ENCODE measurements at regions of chr1 and their contacts with region 1.

Region 1: GRCh38 chr1:206106328-206107167 is 10.6 kb downstream of the AVPR1B start:
- DNase-seq: peak; percentile 65 to 72 (median 68)
- H3K4me3 ChIP-seq: no peak overlapping the region
- H3K4me3 Mint-ChIP-seq: no peak overlapping the region
- H3K27ac ChIP-seq: no peak overlapping the region
- H3K27ac Mint-ChIP-seq: peak overlapping the region in 2 of 7 donors; percentile 16 to 58
- H3K4me1 ChIP-seq: no peaks in the 10 kb centered on the region
- H3K4me1 Mint-ChIP-seq: peaks cover 3 to 9% (median 4%) of the 10 kb centered on the region in 4 donors
- H3K27me3 ChIP-seq: no peaks in the 10 kb centered on the region
- H3K27me3 Mint-ChIP-seq: peaks cover 2 to 6% of the 10 kb centered on the region in 2 donors

Region 2: DNA sequence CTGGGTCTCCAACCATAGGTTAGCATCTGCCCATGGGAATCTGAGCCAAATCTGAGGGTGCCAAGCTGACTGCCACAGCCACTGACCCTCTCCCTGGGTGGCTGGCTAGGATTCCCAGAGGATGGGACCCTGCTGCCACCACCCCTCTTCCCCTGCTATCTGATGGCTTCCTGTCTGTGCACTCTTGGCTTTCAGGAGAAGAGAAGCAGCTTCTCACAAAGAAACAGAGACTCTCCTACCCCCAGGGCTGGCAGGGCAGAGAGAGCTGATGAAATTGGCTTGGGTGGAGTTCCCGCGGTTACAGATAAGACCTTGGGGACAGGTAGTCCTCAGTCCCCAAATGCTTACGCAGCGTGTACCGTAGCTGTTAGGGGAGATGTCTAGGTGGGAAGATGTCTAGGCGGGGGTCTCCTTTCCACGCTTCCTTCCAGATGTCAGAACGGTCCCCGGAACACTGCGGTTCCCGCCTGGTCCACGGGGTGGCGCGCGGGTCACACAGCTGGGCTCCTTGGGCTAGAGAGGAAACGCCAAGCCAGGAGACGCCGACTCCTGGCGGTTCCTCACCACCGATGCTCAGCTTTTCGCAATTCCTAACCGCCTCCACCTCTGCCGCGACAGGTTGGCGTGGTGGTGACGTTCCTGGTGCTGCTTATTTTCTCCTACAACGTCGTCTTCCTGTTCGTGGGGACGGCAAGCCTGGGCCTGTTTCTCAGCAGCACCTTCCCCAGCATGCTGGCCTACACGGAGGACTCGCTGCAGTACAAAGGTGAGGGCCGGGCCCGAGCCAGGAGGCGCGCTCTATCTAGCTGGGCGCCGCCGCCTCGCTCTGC is 514.8 kb before region 1 on chr1:
- CTCF ChIA-PET with region 1: no interaction called
- POLR2A ChIA-PET with region 1: no interaction called
- intact Hi-C with region 1: loop called (anchors 2 kb)
- DNase-seq: peak; percentile 85 to 89 (median 86)
- H3K4me3 ChIP-seq: peak overlapping the region in 1 of 2 donors; percentile 61
- H3K4me3 Mint-ChIP-seq: peak overlapping the region; percentile 87 to 93 (median 90)
- H3K27ac ChIP-seq: peak overlapping the region; percentile 52
- H3K27ac Mint-ChIP-seq: peak overlapping the region; percentile 82 to 96 (median 89)
- H3K4me1 ChIP-seq: peaks cover 21% of the 10 kb centered on the region
- H3K4me1 Mint-ChIP-seq: peaks cover 17 to 34% (median 25%) of the 10 kb centered on the region in 4 donors
- H3K27me3 ChIP-seq: no peaks in the 10 kb centered on the region
- H3K27me3 Mint-ChIP-seq: no peaks in the 10 kb centered on the region

Region 3: DNA sequence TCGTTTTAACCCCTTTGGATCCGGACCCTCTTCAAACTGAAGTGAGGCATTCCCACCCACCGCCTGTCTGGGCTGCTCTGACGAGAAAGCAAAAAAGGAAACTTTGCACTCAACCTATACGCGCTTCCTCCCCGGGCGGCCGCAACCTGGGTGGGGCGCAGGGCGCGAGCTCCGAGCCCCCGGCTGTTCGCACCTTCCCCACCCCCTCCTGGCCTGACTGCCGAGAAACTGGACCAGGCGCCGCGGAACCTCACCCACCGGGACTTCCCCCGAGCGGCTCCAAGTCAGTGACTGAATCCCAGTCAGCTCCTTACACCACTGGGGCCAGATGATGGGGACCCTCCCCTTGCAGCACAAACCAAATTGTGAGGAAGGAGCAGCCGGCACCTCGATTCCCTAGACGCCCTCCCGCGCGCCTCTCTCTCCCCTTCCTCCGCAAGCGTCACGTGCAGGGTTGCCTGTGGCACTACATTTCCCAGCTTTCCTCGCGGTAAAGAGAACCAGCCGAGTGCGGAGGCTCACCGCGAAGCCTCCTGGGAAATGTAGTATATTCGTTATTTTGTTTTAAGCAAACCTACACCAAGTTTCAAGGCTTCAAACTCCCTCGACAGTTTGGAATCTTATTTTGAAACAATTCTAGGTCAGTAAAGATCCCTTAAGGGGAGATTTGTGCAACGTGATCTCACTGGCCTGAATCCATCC is 331.4 kb before region 1 on chr1 and contains the start of gene RAB29:
- CTCF ChIA-PET with region 1: no interaction called
- POLR2A ChIA-PET with region 1: no interaction called
- intact Hi-C with region 1: no loop called
- DNase-seq: peak; percentile 88 to 94 (median 90)
- H3K4me3 ChIP-seq: peak within 1 kb of the TSS; percentile 59 to 77
- H3K4me3 Mint-ChIP-seq: peak within 1 kb of the TSS; percentile 91 to 100 (median 92)
- H3K27ac ChIP-seq: peak within 1 kb of the TSS; percentile 87
- H3K27ac Mint-ChIP-seq: peak within 1 kb of the TSS; percentile 92 to 98 (median 97)
- H3K4me1 ChIP-seq: peaks cover 43% of the 10 kb centered on the region
- H3K4me1 Mint-ChIP-seq: peaks cover 35 to 69% (median 48%) of the 10 kb centered on the region in 4 donors
- H3K27me3 ChIP-seq: no peaks in the 10 kb centered on the region
- H3K27me3 Mint-ChIP-seq: no peaks in the 10 kb centered on the region
- total RNA-seq, gene RAB29: 59.7 to 62.0 TPM

Region 4: DNA sequence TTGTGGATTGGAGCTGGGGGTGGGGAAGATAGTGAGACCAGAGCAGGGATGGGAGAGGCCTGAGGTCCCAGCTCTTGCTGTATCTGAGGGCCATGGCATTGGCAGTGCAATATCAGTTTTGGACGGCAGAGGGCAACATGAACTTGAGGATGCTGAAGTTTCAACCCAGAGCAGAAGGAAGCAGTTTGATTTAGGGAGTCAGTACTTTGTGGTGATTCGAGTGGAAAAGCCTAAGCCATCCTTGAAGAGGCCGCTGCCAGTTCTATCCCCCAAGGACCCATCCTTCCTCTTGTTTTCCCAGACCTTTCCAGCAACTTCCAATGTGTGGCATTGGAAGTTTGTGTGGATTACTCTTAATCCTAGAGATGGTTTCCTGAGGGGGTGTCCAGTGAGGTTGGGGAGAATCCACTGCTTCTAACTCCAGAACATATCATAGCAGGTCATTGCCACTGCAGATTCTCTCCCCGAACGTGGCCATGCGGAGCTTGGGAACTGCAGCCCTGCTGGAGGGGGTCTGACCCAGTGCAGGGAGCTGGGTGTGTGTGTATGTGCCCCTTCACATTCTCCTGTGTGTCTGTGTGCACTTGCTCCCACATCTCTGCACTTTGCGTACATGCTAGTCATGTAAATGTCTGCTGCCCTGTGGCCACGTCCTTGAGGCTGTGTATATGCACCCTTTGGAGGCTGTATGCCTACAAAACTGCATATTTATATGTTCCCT is 187.4 kb before region 1 on chr1:
- CTCF ChIA-PET with region 1: interaction called, 9 read pairs
- POLR2A ChIA-PET with region 1: no interaction called
- intact Hi-C with region 1: loop called (anchors 1 kb)
- DNase-seq: peak; percentile 41 to 62 (median 51)
- H3K4me3 ChIP-seq: no peak overlapping the region
- H3K4me3 Mint-ChIP-seq: no peak overlapping the region
- H3K27ac ChIP-seq: no peak overlapping the region
- H3K27ac Mint-ChIP-seq: no peak overlapping the region
- H3K4me1 ChIP-seq: no peaks in the 10 kb centered on the region
- H3K4me1 Mint-ChIP-seq: peaks cover 0 to 1% (median 0%) of the 10 kb centered on the region in 4 donors
- H3K27me3 ChIP-seq: no peaks in the 10 kb centered on the region
- H3K27me3 Mint-ChIP-seq: peaks cover 0 to 5% of the 10 kb centered on the region in 2 donors

Region 5: DNA sequence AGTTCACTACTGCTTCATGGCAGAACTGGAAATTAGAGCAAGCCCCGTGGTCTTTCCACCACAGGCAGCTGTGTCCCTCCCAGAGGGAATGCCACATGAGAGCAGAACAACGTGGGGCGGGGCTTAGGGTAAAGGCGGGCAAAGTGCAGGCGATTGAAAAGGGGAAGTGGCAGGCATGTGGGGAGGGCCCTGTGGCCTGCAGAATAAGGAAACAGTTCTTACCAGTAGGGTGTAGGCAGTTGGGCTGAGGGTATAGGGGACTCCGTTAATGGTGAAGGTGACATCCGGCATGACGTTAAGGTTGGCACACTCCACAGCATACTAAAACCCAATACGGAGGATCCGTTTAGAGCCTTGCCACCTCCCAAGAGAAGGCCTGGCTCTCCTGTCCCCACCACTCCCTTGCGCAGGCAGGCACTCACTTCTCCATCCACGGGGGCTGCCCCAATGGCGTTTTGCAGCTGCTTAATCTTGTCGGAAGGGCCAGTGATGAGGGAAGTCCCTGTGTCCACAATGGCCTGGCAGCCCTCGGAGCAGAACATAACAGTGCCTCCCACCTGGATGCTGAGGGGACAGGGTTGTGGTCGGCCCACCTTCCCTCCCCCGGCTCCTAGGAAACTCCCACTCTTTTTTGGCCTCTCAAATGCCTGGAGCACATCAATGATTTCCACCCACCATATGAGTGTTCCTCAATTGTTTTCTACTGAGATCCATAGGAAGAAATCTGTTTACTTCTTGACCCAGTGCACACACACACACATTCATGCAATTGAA is 94.3 kb before region 1 on chr1:
- CTCF ChIA-PET with region 1: no interaction called
- POLR2A ChIA-PET with region 1: no interaction called
- intact Hi-C with region 1: no loop called
- DNase-seq: peak in 4 of 5 donors; percentile 2 to 35 (median 17)
- H3K4me3 ChIP-seq: no peak overlapping the region
- H3K4me3 Mint-ChIP-seq: peak overlapping the region in 4 of 8 donors; percentile 13 to 54 (median 42)
- H3K27ac ChIP-seq: no peak overlapping the region
- H3K27ac Mint-ChIP-seq: peak overlapping the region in 3 of 7 donors; percentile 25 to 67 (median 33)
- H3K4me1 ChIP-seq: peaks cover 8% of the 10 kb centered on the region
- H3K4me1 Mint-ChIP-seq: peaks cover 5 to 14% (median 9%) of the 10 kb centered on the region in 4 donors
- H3K27me3 ChIP-seq: no peaks in the 10 kb centered on the region
- H3K27me3 Mint-ChIP-seq: peaks cover 0 to 2% of the 10 kb centered on the region in 2 donors

Region 6: DNA sequence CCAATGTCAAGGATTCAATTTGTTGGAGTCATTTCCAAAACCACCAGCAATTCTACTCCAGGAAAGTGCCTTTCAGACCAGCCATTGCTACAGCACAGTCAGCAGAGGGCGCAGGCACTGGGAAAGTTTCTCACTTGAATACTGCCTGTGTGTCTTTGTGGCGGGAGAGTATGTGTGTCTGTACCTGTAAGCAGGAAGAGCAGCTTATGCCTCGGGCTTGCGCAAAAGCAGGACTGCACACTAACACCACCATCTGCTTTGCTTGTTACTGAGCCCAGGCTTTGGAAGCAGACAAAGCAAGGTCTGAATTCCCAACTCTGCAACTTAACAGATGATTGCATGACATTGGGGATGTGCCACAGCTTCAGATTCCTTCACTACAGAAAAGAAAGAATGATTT is 75.8 kb before region 1 on chr1:
- CTCF ChIA-PET with region 1: interaction called, 182 read pairs
- POLR2A ChIA-PET with region 1: interaction called, 8 read pairs
- intact Hi-C with region 1: no loop called
- DNase-seq: peak; percentile 54 to 71 (median 65)
- H3K4me3 ChIP-seq: no peak overlapping the region
- H3K4me3 Mint-ChIP-seq: peak overlapping the region in 2 of 8 donors; percentile 9 to 46
- H3K27ac ChIP-seq: no peak overlapping the region
- H3K27ac Mint-ChIP-seq: peak overlapping the region in 2 of 7 donors; percentile 20 to 21
- H3K4me1 ChIP-seq: no peaks in the 10 kb centered on the region
- H3K4me1 Mint-ChIP-seq: peaks cover 0 to 12% (median 5%) of the 10 kb centered on the region in 4 donors
- H3K27me3 ChIP-seq: no peaks in the 10 kb centered on the region
- H3K27me3 Mint-ChIP-seq: peaks cover 3 to 8% of the 10 kb centered on the region in 2 donors

Region 7: DNA sequence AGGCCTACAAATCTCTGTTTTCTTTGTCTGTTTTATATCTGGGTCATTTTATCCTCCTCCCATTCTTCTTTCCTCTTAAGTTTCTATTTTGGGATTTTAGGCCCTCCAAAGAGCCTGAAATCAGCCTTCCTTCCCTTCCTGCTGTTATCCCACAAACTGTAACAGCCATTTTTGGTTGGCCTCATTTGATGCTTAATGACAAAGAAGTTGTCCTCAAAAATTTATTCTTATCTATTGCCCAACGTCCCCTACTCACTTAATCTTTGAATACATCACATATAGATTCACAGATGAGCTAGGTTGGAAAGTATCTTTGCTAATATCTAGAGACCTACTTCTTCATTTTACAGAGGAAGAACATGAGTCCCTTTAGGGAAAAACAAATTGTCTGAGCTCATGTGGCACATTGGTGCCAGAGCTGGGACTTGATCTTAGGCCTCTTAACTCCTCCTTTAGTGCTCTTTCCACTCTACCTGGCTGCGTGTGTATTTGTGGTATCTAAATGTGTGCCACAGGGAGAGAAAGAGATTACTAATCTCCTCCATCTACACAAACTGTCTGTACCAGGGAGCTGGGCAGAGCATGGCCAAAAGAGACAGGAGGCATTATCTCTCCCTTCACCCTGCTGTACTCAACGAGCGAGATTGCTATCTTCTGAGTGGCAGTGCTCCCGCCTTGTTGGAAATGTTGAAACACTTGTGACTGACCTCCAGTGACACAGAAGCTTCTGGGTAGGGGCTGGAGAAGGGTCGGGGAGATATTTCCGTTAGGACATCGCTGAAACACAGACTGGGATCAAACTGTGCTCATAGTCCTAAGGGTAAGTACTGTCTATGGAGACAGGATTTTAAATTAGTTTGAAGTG is 23.5 kb before region 1 on chr1:
- CTCF ChIA-PET with region 1: interaction called, 10 read pairs
- POLR2A ChIA-PET with region 1: no interaction called
- intact Hi-C with region 1: no loop called
- DNase-seq: no peak
- H3K4me3 ChIP-seq: no peak overlapping the region
- H3K4me3 Mint-ChIP-seq: no peak overlapping the region
- H3K27ac ChIP-seq: no peak overlapping the region
- H3K27ac Mint-ChIP-seq: peak overlapping the region in 3 of 7 donors; percentile 5 to 18 (median 9)
- H3K4me1 ChIP-seq: peaks cover 19% of the 10 kb centered on the region
- H3K4me1 Mint-ChIP-seq: peaks cover 14 to 19% (median 16%) of the 10 kb centered on the region in 4 donors
- H3K27me3 ChIP-seq: no peaks in the 10 kb centered on the region
- H3K27me3 Mint-ChIP-seq: no peaks in the 10 kb centered on the region

Region 8: GRCh38 chr1:206143537-206144172 is 37.1 kb after region 1 on chr1:
- CTCF ChIA-PET with region 1: no interaction called
- POLR2A ChIA-PET with region 1: no interaction called
- intact Hi-C with region 1: no loop called
- DNase-seq: no peak
- H3K4me3 ChIP-seq: no peak overlapping the region
- H3K4me3 Mint-ChIP-seq: no peak overlapping the region
- H3K27ac ChIP-seq: no peak overlapping the region
- H3K27ac Mint-ChIP-seq: no peak overlapping the region
- H3K4me1 ChIP-seq: no peaks in the 10 kb centered on the region
- H3K4me1 Mint-ChIP-seq: no peaks in the 10 kb centered on the region
- H3K27me3 ChIP-seq: peaks cover 4% of the 10 kb centered on the region
- H3K27me3 Mint-ChIP-seq: peaks cover 17 to 33% of the 10 kb centered on the region in 2 donors